ENCODE measurements at regions of chr17 and their contacts with region 1.

Region 1: GRCh38 chr17:49997791-49998703 is 3.0 kb upstream of the DLX3 start:
- DNase-seq: peak; percentile 88
- ATAC-seq: peak; percentile 61
- H3K4me3 Mint-ChIP-seq: peak overlapping the region; percentile 65
- H3K27ac Mint-ChIP-seq: no peak overlapping the region
- H3K4me1 Mint-ChIP-seq: peaks cover 29% of the 10 kb centered on the region
- H3K27me3 Mint-ChIP-seq: peaks cover 86% of the 10 kb centered on the region
- CTCF ChIP-seq: peak; percentile 98

Region 2: DNA sequence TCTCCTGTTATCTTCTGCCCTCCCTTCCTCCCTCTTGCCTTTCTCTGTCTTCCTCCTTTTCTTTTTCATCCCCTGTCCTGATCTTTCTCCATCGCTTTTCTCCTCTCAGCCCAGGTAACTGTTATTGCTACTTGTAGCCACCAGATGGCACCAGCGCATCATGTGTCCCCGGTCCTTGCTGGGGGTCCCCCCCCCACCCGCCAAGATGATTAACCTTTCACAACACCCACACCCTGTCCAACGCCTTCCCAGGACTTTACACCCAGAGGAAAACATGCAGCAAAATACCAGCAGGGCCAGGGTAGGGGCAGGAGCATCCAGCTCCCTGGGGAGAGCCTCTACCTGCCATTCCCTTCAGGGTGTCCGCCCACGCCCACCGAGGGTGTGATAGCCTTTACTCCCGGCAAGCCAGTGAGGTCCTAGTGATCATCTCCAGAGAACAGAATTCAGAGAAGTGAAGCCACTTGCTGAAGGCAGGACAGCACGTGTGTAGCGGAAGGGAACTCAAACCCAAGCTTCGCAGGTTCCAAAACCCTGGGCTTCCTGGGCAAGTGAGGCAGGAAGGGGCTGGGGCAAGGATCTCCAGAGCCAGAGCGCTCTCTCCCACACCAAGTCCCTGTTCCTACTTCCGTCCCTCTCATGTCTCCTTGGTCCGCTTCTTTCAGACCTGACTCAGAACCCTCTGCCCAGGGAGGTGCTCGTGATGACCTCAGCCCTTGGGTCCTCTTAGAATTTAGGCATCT is 136.7 kb before region 1 on chr17:
- CTCF ChIA-PET with region 1: interaction called, 269 read pairs
- POLR2A ChIA-PET with region 1: interaction called, 4 read pairs
- DNase-seq: no peak
- ATAC-seq: no peak
- H3K4me3 Mint-ChIP-seq: no peak overlapping the region
- H3K27ac Mint-ChIP-seq: no peak overlapping the region
- H3K4me1 Mint-ChIP-seq: peaks cover 41% of the 10 kb centered on the region
- H3K27me3 Mint-ChIP-seq: peaks cover 2% of the 10 kb centered on the region; the same call in 1 of the 2 replicates
- CTCF ChIP-seq: peak; percentile 80

Region 3: DNA sequence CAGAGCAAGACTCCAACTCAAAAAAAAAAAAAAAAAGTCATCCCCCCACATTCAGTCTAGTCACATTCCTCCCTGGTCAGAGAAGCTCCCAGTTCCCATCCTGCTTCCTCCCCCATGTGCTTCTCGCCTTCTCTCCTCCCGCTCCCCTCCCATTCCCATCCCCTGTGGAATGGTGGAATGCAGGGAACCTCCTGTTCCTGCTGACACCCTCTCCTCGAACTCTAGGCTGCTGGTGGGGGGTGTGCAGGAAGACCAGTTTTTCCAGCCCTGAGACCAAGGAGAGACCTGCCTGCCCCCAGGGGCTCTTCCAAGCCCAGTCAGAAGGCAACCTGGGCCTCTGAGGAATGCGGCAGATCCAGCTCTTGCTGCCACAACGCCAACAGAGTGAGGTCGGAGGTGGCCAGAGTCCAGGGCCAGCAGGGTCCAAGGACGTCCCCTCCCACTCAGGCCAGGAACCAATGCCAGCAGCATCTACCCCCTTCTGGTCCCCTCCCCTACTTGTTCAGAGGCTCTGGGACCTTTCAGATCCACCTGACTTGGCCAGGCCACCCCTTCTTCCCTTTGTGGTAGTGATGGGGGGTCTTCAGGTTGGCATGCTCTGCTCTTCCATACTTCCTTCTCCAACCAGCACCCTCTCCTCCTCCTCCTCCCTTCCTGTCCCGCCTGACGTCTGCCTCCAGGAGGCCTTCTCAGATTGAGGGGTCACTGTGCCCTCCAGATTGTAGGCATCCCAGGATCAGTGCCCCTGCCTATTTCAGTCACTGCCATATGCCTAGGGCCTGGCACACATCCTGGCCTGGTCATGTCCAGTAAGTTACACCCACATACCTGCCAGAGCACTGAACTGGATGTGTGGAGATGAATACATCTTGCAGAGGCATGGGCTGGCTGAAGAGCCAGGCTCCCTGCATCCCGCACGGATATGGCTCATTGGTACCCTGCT is 110.7 kb before region 1 on chr17:
- CTCF ChIA-PET with region 1: interaction called, 23 read pairs
- POLR2A ChIA-PET with region 1: no interaction called
- DNase-seq: peak; percentile 56
- ATAC-seq: peak; percentile 41
- H3K4me3 Mint-ChIP-seq: no peak overlapping the region
- H3K27ac Mint-ChIP-seq: peak overlapping the region; percentile 71; the same call in 1 of the 2 replicates
- H3K4me1 Mint-ChIP-seq: peaks cover 24% of the 10 kb centered on the region
- H3K27me3 Mint-ChIP-seq: peaks cover 34% of the 10 kb centered on the region
- CTCF ChIP-seq: no peak

Region 4: GRCh38 chr17:49915670-49916069 is 82.4 kb before region 1 on chr17:
- CTCF ChIA-PET with region 1: interaction called, 79 read pairs
- POLR2A ChIA-PET with region 1: no interaction called
- DNase-seq: peak; percentile 38
- ATAC-seq: peak; percentile 56
- H3K4me3 Mint-ChIP-seq: no peak overlapping the region
- H3K27ac Mint-ChIP-seq: no peak overlapping the region
- H3K4me1 Mint-ChIP-seq: peaks cover 22% of the 10 kb centered on the region
- H3K27me3 Mint-ChIP-seq: peaks cover 56% of the 10 kb centered on the region
- CTCF ChIP-seq: no peak

Region 5: GRCh38 chr17:49968380-49969133 is 29.5 kb before region 1 on chr17:
- CTCF ChIA-PET with region 1: interaction called, 221 read pairs
- POLR2A ChIA-PET with region 1: interaction called, 4 read pairs
- DNase-seq: peak; percentile 95
- ATAC-seq: peak; percentile 72
- H3K4me3 Mint-ChIP-seq: peak overlapping the region; percentile 93
- H3K27ac Mint-ChIP-seq: peak overlapping the region; percentile 95
- H3K4me1 Mint-ChIP-seq: peaks cover 51% of the 10 kb centered on the region
- H3K27me3 Mint-ChIP-seq: peaks cover 99% of the 10 kb centered on the region
- CTCF ChIP-seq: no peak

Region 6: GRCh38 chr17:50047488-50048126 is 49.6 kb after region 1 on chr17:
- CTCF ChIA-PET with region 1: no interaction called
- POLR2A ChIA-PET with region 1: no interaction called
- DNase-seq: no peak
- ATAC-seq: no peak
- H3K4me3 Mint-ChIP-seq: no peak overlapping the region
- H3K27ac Mint-ChIP-seq: no peak overlapping the region
- H3K4me1 Mint-ChIP-seq: peaks cover 41% of the 10 kb centered on the region
- H3K27me3 Mint-ChIP-seq: peaks cover 6% of the 10 kb centered on the region
- CTCF ChIP-seq: no peak

Region 7: GRCh38 chr17:50087246-50087911 is 89.3 kb after region 1 on chr17:
- CTCF ChIA-PET with region 1: interaction called, 31 read pairs
- POLR2A ChIA-PET with region 1: no interaction called
- DNase-seq: peak; percentile 89
- ATAC-seq: peak; percentile 96
- H3K4me3 Mint-ChIP-seq: no peak overlapping the region
- H3K27ac Mint-ChIP-seq: no peak overlapping the region
- H3K4me1 Mint-ChIP-seq: no peaks in the 10 kb centered on the region
- H3K27me3 Mint-ChIP-seq: no peaks in the 10 kb centered on the region
- CTCF ChIP-seq: peak; percentile 99